ENCODE measurements at regions of chr10 and their contacts with region 1.

Region 1: DNA sequence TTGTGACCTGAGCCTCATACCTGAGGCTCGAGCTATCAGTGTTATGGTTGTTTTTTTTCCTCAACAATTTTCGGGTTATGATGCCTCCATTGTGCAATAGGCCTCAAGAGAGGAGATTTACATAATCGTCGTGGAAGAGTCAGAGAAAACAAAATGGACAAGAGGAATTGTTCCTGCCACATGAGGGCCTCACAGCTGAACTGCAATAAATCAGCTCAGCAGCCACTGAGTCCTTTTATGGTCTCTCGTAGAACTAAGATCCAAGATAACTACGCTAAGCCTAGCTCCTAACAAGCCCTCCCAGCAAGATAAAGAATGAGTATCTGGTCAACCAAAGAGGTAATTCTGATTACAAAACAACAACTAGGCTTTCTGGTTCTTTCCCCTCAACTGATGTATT is 336.8 kb downstream of the WDR11 start:
- DNase-seq: peak; percentile 85 to 86
- H3K4me3 ChIP-seq: no peak overlapping the region
- H3K4me3 Mint-ChIP-seq: peak overlapping the region; percentile 38
- H3K27ac Mint-ChIP-seq: peak overlapping the region; percentile 89
- H3K4me1 ChIP-seq: peaks cover 31% of the 10 kb centered on the region
- H3K4me1 Mint-ChIP-seq: peaks cover 24% of the 10 kb centered on the region
- H3K27me3 ChIP-seq: no peaks in the 10 kb centered on the region
- H3K27me3 Mint-ChIP-seq: no peaks in the 10 kb centered on the region
- CTCF ChIP-seq: peak; percentile 37 to 50

Region 2: DNA sequence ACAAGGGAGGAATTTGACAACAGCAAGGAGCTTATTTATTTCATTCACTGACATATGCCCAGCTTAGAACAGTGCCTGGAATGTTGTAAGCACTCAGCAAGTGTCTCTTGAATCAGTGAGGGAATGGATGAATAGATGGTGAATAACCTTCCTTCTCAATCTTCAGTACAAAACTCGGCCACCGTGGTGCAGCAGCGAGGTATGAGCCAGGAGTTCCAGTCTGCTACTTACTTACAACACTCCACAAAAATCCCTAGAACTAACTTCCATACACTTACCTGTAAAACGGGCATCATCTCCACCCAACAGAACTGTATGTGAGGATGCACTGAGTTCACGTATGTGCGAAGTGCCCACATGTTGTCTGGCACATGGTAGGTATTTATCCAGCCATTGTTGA is 99.5 kb before region 1 on chr10:
- CTCF ChIA-PET with region 1: interaction called, 5 read pairs
- POLR2A ChIA-PET with region 1: no interaction called
- intact Hi-C with region 1: loop called (anchors 1 kb)
- DNase-seq: peak; percentile 68 to 72
- H3K4me3 ChIP-seq: no peak overlapping the region
- H3K4me3 Mint-ChIP-seq: no peak overlapping the region
- H3K27ac Mint-ChIP-seq: peak overlapping the region; percentile 5
- H3K4me1 ChIP-seq: peaks cover 45% of the 10 kb centered on the region
- H3K4me1 Mint-ChIP-seq: peaks cover 36% of the 10 kb centered on the region
- H3K27me3 ChIP-seq: no peaks in the 10 kb centered on the region
- H3K27me3 Mint-ChIP-seq: no peaks in the 10 kb centered on the region
- CTCF ChIP-seq: peak; percentile 51 to 55

Region 3: GRCh38 chr10:121284936-121285335 is 96.9 kb after region 1 on chr10:
- CTCF ChIA-PET with region 1: no interaction called
- POLR2A ChIA-PET with region 1: no interaction called
- intact Hi-C with region 1: loop called (anchors 5 kb)
- DNase-seq: no peak
- H3K4me3 ChIP-seq: no peak overlapping the region
- H3K4me3 Mint-ChIP-seq: no peak overlapping the region
- H3K27ac Mint-ChIP-seq: no peak overlapping the region
- H3K4me1 ChIP-seq: no peaks in the 10 kb centered on the region
- H3K4me1 Mint-ChIP-seq: peaks cover 13% of the 10 kb centered on the region
- H3K27me3 ChIP-seq: no peaks in the 10 kb centered on the region
- H3K27me3 Mint-ChIP-seq: no peaks in the 10 kb centered on the region
- CTCF ChIP-seq: no peak

Region 4: GRCh38 chr10:121378251-121378801 is 190.3 kb after region 1 on chr10:
- CTCF ChIA-PET with region 1: interaction called, 4 read pairs
- POLR2A ChIA-PET with region 1: no interaction called
- intact Hi-C with region 1: loop called (anchors 2 kb)
- DNase-seq: peak; percentile 62 to 66
- H3K4me3 ChIP-seq: no peak overlapping the region
- H3K4me3 Mint-ChIP-seq: peak overlapping the region; percentile 52
- H3K27ac Mint-ChIP-seq: peak overlapping the region; percentile 88
- H3K4me1 ChIP-seq: peaks cover 70% of the 10 kb centered on the region
- H3K4me1 Mint-ChIP-seq: peaks cover 56% of the 10 kb centered on the region
- H3K27me3 ChIP-seq: no peaks in the 10 kb centered on the region
- H3K27me3 Mint-ChIP-seq: no peaks in the 10 kb centered on the region
- CTCF ChIP-seq: no peak

Region 5: GRCh38 chr10:121598207-121598862 is 410.3 kb after region 1 on chr10 and contains the start of gene FGFR2:
- CTCF ChIA-PET with region 1: no interaction called
- POLR2A ChIA-PET with region 1: no interaction called
- intact Hi-C with region 1: loop called (anchors 10 kb)
- DNase-seq: peak; percentile 88 to 95
- H3K4me3 ChIP-seq: peak within 1 kb of the TSS; percentile 98
- H3K4me3 Mint-ChIP-seq: peak within 1 kb of the TSS; percentile 95
- H3K27ac Mint-ChIP-seq: peak within 1 kb of the TSS; percentile 91
- H3K4me1 ChIP-seq: peaks cover 39% of the 10 kb centered on the region
- H3K4me1 Mint-ChIP-seq: peaks cover 18% of the 10 kb centered on the region
- H3K27me3 ChIP-seq: no peaks in the 10 kb centered on the region
- H3K27me3 Mint-ChIP-seq: no peaks in the 10 kb centered on the region
- CTCF ChIP-seq: no peak
- total RNA-seq, gene FGFR2: 266 and 286 TPM in 2 replicates